Esophagus muscularis mucosa (tissue), 4 donors: ENCODE measurements at regions of chr11 and their contacts with region 1.

Region 1: DNA sequence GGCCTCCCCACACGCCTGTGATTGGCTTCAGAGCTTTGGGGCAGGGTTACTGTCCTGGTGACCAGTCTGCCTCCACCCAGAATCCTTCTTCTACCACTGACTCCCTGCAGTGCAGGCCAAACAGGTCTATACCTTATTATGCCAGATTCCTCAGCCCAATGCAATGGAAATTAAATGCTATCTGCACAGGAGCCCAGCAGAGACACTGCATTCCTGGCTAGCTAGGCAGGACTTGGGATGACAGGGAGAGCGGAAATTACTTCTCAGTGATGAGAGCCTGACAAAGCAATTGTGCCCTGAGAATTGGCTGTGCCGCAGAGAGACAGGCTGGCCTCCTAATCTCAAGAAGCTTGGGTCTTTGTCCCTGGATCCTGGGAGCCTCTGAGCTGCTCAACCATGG is 143.8 kb upstream of the NCAM1 start:
- DNase-seq: no peak
- H3K4me3 ChIP-seq: no peak overlapping the region
- H3K27ac ChIP-seq: no peak overlapping the region
- H3K4me1 ChIP-seq: no peaks in the 10 kb centered on the region
- H3K27me3 ChIP-seq: no peaks in the 10 kb centered on the region
- CTCF ChIP-seq: no peak
- EP300 ChIP-seq: no peak
- POLR2A ChIP-seq: no peak

Region 2: DNA sequence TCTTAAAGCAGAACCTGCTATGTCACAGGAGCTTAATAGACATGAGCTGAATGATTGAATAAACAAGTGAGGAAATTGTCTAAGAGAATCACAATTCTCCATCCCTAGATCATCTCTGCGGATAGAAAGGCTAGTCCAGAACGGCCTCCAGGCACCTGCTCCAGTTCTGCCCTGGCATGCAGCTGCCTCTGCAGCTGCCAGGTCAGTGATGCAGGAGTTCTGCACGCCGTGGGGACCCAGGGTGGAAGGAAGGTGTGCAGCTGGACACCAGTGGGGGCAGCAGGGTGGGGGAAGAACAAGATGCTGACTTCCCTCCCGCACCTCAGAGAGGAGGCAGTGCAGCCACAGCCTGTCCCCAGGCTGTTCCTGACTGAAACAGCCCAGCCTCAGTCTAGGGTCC is 48.2 kb before region 1 on chr11:
- intact Hi-C with region 1: no loop called
- DNase-seq: no peak
- H3K4me3 ChIP-seq: no peak overlapping the region
- H3K27ac ChIP-seq: no peak overlapping the region
- H3K4me1 ChIP-seq: peaks cover 7 to 14% (median 8%) of the 10 kb centered on the region in 4 donors
- H3K27me3 ChIP-seq: no peaks in the 10 kb centered on the region
- CTCF ChIP-seq: no peak
- EP300 ChIP-seq: no peak
- POLR2A ChIP-seq: no peak

Region 3: GRCh38 chr11:112961146-112961668 is 143.8 kb after region 1 on chr11 and contains the start of gene NCAM1:
- intact Hi-C with region 1: loop called (anchors 10 kb)
- DNase-seq: no peak
- H3K4me3 ChIP-seq: peak within 1 kb of the TSS; percentile 75 to 81 (median 78)
- H3K27ac ChIP-seq: peak within 1 kb of the TSS; percentile 79 to 86 (median 82)
- H3K4me1 ChIP-seq: peaks cover 6 to 40% (median 31%) of the 10 kb centered on the region in 4 donors
- H3K27me3 ChIP-seq: peaks cover 0 to 21% (median 3%) of the 10 kb centered on the region in 4 donors
- CTCF ChIP-seq: no peak
- EP300 ChIP-seq: no peak
- POLR2A ChIP-seq: no peak
- total RNA-seq, gene NCAM1: 83.5 to 161 (median 95.2) TPM